BJ (cell line): ENCODE measurements at regions of chr2 and their contacts with region 1.

Region 1: GRCh38 chr2:8685697-8686358 is 4.0 kb downstream of the ID2 start:
- DNase-seq: no peak
- H3K4me3 ChIP-seq: peak overlapping the region; percentile 94
- H3K27me3 ChIP-seq: no peaks in the 10 kb centered on the region
- CTCF ChIP-seq: peak; percentile 59

Region 2: DNA sequence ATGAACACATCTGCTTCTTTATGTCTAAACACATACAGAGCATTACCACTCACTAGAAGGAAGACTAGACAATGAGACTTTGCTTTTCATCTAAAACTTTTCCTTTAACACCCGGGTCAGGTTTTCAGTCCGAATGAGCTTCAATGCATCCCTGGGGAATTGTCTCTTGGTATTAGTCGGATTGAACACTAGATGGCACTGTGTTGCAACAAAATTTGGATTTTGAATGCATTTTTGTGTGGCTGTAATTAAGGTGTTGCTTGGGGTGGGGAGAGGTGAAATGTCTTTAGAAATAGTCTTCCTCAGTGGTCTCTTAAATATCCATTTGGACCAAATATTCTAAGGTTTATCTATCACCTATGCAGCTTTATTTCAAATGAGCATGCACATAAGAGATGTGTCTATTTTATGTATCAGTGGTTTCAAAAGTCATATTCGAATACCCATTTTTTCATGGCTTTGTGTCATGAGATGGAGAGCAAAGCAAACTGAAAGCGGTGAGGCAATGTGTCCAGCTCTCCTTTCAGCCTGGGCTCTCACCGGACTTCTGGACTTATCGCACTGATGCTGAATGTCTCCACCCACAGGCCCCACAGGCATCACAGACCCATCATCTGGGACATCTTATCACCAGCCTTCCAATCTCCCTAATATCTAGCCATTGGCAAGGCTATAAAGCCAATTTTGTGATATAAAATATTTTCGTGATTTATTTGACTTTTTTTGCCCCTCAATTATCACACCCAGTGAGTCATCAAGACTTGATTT is 1258.4 kb before region 1 on chr2:
- CTCF ChIA-PET with region 1: interaction called, 11 read pairs
- POLR2A ChIA-PET with region 1: no interaction called
- DNase-seq: no peak
- H3K4me3 ChIP-seq: no peak overlapping the region
- H3K27me3 ChIP-seq: peaks cover 1% of the 10 kb centered on the region
- CTCF ChIP-seq: peak; percentile 56

Region 3: GRCh38 chr2:8303322-8303832 is 382.5 kb before region 1 on chr2:
- CTCF ChIA-PET with region 1: no interaction called
- POLR2A ChIA-PET with region 1: interaction called, 11 read pairs
- DNase-seq: no peak
- H3K4me3 ChIP-seq: no peak overlapping the region
- H3K27me3 ChIP-seq: no peaks in the 10 kb centered on the region
- CTCF ChIP-seq: no peak

Region 4: DNA sequence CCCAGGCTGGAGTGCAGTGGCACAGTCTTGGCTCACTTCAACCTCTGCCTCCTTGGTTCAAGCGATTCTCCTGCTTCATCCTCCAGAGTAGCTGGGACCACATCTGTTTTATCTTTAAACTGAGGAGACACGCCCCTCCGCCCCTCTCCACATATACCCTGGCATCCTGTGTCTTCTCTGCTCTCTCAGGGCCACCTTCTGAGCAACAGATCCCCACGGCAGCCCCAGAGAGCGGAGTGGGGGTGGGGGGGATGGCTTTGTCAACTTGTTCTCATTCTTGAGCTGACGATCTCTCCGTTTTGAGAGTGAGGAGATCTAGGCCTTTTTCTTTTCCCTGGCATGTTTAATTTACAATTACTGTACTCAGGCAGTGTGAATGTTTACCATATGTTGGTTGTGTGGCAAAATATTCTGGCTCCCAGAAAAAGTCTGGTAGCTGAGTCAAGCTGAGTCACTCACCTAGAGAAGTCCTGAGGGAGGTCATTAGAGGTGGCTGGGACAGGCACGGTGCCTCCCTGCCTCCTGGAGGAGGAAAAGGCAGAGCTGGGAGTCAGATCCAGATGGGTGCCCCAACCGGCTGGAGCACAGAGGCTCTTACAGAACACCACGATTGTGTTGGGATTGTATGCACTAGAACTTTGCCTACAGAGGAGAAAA is 23.5 kb before region 1 on chr2:
- CTCF ChIA-PET with region 1: interaction called, 4 read pairs
- POLR2A ChIA-PET with region 1: interaction called, 10 read pairs
- DNase-seq: peak; percentile 61
- H3K4me3 ChIP-seq: no peak overlapping the region
- H3K27me3 ChIP-seq: no peaks in the 10 kb centered on the region; the same call in 1 of the 2 replicates
- CTCF ChIP-seq: peak; percentile 45